WTC11 (cell line): ENCODE measurements at regions of chr2 and their contacts with region 1.

Region 1: GRCh38 chr2:219206442-219207253 is at the start of gene ZFAND2B:
- DNase-seq: peak; percentile 93
- ATAC-seq: peak; percentile 96
- H3K4me3 Mint-ChIP-seq: peak within 1 kb of the TSS; percentile 74
- H3K27ac Mint-ChIP-seq: peak within 1 kb of the TSS; percentile 91
- H3K4me1 Mint-ChIP-seq: peaks cover 6% of the 10 kb centered on the region
- H3K27me3 Mint-ChIP-seq: peaks cover 15% of the 10 kb centered on the region
- CTCF ChIP-seq: no peak
- total RNA-seq, gene ZFAND2B: 19.5 to 21.1 TPM (median 20.2 TPM) in 3 replicates

Region 2: GRCh38 chr2:219171231-219171651 is 35.4 kb before region 1 on chr2:
- CTCF ChIA-PET with region 1: interaction called, 11 read pairs
- POLR2A ChIA-PET with region 1: no interaction called
- DNase-seq: peak; percentile 23
- ATAC-seq: peak; percentile 74
- H3K4me3 Mint-ChIP-seq: no peak overlapping the region
- H3K27ac Mint-ChIP-seq: peak overlapping the region; percentile 88
- H3K4me1 Mint-ChIP-seq: peaks cover 9% of the 10 kb centered on the region; the same call in 1 of the 2 replicates
- H3K27me3 Mint-ChIP-seq: no peaks in the 10 kb centered on the region
- CTCF ChIP-seq: peak; percentile 46; the same call in 1 of the 2 replicates

Region 3: DNA sequence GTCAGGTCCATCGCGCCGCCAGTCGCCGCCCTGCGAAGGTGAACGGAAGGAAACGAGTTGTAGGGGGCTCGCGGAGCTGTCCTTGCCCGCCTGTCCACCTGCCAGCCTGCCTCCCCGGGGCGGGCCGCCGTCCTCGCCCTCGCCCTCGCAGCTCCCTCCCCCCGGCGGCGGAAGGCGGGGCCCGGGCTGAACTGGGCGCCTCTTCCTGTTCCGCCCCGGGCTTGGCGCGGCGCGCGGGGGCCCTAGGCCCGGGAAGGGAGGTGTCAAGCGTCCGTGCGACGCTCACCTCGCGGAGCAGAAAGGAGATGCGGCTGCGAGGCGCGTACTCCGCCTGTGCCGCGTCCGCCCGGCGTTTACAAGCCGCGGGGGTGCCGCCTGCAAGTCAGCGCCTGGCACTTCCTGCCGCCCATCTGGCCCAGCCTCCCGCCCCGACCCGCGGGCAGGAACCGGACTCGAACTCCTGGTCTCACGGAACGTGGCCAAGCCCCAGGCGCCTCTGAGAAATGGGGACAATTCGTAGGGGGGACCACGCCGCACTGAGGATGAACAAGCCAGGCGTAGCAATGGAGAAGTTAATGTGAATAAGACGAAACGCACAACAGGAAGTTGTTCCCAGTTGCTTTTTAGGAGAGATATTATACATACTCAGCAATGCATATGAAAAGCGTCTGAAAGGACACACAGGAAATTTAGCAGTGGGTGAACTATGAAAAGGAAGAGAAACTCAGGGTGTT is 29.7 kb before region 1 on chr2 and contains the start of gene CNPPD1:
- CTCF ChIA-PET with region 1: interaction called, 11 read pairs
- POLR2A ChIA-PET with region 1: interaction called, 6 read pairs
- DNase-seq: peak; percentile 76
- ATAC-seq: peak; percentile 55
- H3K4me3 Mint-ChIP-seq: peak within 1 kb of the TSS; percentile 88
- H3K27ac Mint-ChIP-seq: peak within 1 kb of the TSS; percentile 98
- H3K4me1 Mint-ChIP-seq: peaks cover 19% of the 10 kb centered on the region
- H3K27me3 Mint-ChIP-seq: no peaks in the 10 kb centered on the region
- CTCF ChIP-seq: no peak
- total RNA-seq, gene CNPPD1: 26.7 to 32.8 TPM (median 29.5 TPM) in 3 replicates